ENCODE measurements at regions of chr10 and their contacts with region 1.

Region 1: GRCh38 chr10:33066558-33067236 is 108.7 kb upstream of the ITGB1 start:
- DNase-seq: no peak
- ATAC-seq: no peak
- H3K4me3 ChIP-seq: no peak overlapping the region
- H3K27ac ChIP-seq: peak overlapping the region; percentile 12; the same call in 1 of the 2 replicates
- H3K4me1 ChIP-seq: no peaks in the 10 kb centered on the region
- H3K27me3 ChIP-seq: no peaks in the 10 kb centered on the region
- CTCF ChIP-seq: peak; percentile 15

Region 2: GRCh38 chr10:33114451-33114944 is 47.8 kb after region 1 on chr10:
- CTCF ChIA-PET with region 1: interaction called, 12 read pairs
- POLR2A ChIA-PET with region 1: no interaction called
- in situ Hi-C with region 1: no loop called
- intact Hi-C with region 1: no loop called
- DNase-seq: no peak
- ATAC-seq: no peak
- H3K4me3 ChIP-seq: no peak overlapping the region
- H3K27ac ChIP-seq: peak overlapping the region; percentile 54; the same call in 1 of the 2 replicates
- H3K4me1 ChIP-seq: no peaks in the 10 kb centered on the region
- H3K27me3 ChIP-seq: no peaks in the 10 kb centered on the region
- CTCF ChIP-seq: no peak

Measured in Panc1 (cell line).